ENCODE measurements at regions of chr5 and their contacts with region 1.

Region 1: DNA sequence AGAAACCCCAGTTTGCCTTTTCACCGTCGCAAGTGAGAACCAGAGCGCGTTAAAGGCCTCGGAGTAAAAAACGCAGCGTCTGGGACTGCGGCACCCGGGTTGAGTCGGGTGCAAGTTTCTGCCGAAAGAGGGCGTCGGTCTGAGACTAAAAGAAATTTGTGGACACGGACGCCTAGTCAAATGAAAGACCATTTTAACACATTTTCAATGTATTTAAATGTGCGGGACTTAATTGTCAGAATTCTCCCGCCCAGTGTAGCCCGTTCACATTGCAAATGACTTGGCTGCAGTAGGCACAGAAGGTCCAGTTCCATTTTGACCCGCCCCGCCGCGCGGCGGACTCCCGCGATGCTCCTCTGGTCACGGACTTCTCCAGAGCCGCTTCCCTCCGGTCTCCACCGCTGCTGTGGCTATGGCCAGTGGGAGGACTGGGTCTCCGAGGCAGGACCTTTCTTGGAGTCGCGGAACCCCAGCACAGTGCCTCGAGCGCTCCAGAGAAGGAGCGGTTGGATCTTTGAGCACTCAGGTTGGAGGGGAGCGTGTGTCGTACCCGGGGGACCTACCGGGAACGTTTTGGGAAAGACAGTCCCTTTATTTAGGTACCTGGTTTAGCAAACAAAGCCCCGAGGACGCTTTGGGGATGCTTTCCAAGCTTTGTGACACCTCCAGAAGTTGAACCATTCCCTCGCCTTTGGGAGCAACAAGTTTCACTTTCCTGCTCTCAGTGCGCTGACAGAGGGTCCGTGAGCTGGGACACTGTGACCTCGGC is 1.2 kb upstream of the NPR3 start:
- H3K4me3 Mint-ChIP-seq: peak overlapping the region; percentile 76
- H3K27ac Mint-ChIP-seq: no peak overlapping the region
- H3K4me1 Mint-ChIP-seq: peaks cover 57% of the 10 kb centered on the region
- H3K27me3 Mint-ChIP-seq: peaks cover 66% of the 10 kb centered on the region

Region 2: GRCh38 chr5:32217886-32218396 is 492.0 kb before region 1 on chr5:
- intact Hi-C with region 1: no loop called
- H3K4me3 Mint-ChIP-seq: no peak overlapping the region
- H3K27ac Mint-ChIP-seq: no peak overlapping the region
- H3K4me1 Mint-ChIP-seq: peaks cover 18% of the 10 kb centered on the region
- H3K27me3 Mint-ChIP-seq: no peaks in the 10 kb centered on the region

Region 3: GRCh38 chr5:33257807-33258483 is 548.0 kb after region 1 on chr5:
- intact Hi-C with region 1: loop called (anchors 10 kb)
- H3K4me3 Mint-ChIP-seq: no peak overlapping the region
- H3K27ac Mint-ChIP-seq: no peak overlapping the region
- H3K4me1 Mint-ChIP-seq: no peaks in the 10 kb centered on the region
- H3K27me3 Mint-ChIP-seq: peaks cover 3% of the 10 kb centered on the region

Region 4: DNA sequence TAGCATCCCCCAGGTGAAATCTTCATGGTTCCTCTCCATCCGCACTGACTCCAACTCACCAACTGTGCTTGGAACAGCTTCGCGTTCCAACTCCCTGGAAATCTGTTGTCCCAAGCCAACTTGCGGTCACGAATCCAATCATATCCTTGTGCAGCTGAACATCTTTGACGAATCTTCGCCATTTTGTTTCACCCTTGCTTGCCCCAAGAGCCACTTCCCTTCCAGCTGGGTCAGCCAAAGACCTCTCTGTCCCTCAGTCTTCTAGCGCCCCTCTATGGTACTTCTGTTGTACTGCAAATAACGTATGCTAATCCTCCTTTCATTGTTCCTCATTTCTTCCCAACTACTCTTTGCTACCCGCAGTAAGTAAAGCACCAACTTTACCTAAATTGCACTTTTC is 669.8 kb after region 1 on chr5:
- intact Hi-C with region 1: loop called (anchors 1 kb)
- H3K4me3 Mint-ChIP-seq: no peak overlapping the region
- H3K27ac Mint-ChIP-seq: no peak overlapping the region
- H3K4me1 Mint-ChIP-seq: peaks cover 5% of the 10 kb centered on the region
- H3K27me3 Mint-ChIP-seq: no peaks in the 10 kb centered on the region

Region 5: GRCh38 chr5:33423018-33423630 is 713.2 kb after region 1 on chr5:
- intact Hi-C with region 1: loop called (anchors 2 kb)
- H3K4me3 Mint-ChIP-seq: no peak overlapping the region
- H3K27ac Mint-ChIP-seq: no peak overlapping the region
- H3K4me1 Mint-ChIP-seq: no peaks in the 10 kb centered on the region
- H3K27me3 Mint-ChIP-seq: no peaks in the 10 kb centered on the region

Measured in dendritic cell treated with granulocyte-macrophage colony-stimulating factor and Interleukin-4, amounts not matched to agents 40 ng/mL and 50 ng/mL, for 4 days (primary cell).